Astrocyte of the cerebellum (primary cell): ENCODE measurements at regions of chr5 and their contacts with region 1.

Region 1: DNA sequence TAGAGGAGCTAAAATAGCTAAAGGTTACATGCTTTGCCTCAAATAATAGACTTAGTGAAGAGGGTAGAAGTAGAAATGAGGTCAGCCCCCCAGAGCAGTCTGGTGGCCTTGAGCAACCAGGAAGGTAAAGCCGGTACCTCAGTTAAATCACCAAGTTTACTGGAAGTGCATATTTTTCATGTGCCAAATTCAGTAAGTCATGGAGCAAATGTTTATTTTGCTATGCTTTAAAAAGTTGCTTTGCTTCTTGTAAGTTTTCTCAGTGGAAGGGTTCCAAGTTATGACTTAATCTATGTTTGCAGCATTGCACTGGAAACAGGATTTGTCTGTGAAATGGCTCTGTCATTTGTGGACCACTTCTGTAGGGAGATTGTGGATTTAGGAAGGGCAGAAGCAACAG is 256.7 kb downstream of the ARRDC3 start:
- DNase-seq: peak; percentile 88
- H3K4me3 ChIP-seq: no peak overlapping the region
- CTCF ChIP-seq: no peak

Region 2: DNA sequence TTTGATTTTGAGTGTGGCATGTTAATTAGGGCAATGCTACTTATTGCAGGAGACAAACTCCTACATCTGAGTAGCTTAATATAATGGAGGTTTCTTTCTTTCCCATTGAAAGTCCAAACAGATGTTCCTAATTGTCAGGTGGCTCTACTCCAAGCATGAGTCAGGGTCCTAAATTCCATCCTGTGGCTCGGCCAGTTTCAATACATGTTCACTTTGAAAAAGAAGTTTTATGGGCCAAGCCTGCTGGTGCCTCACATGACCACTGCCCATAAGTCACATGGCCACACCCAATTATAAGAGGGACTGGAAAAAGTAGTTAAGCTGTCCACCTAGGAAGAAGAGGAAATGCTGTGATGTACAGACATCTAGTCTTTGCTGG is 86.3 kb after region 1 on chr5:
- in situ Hi-C with region 1: loop called (anchors 5 kb)
- DNase-seq: peak; percentile 94
- H3K4me3 ChIP-seq: no peak overlapping the region
- CTCF ChIP-seq: no peak